CD14-positive monocyte (primary cell): ENCODE measurements at regions of chr13 and their contacts with region 1.

Region 1: DNA sequence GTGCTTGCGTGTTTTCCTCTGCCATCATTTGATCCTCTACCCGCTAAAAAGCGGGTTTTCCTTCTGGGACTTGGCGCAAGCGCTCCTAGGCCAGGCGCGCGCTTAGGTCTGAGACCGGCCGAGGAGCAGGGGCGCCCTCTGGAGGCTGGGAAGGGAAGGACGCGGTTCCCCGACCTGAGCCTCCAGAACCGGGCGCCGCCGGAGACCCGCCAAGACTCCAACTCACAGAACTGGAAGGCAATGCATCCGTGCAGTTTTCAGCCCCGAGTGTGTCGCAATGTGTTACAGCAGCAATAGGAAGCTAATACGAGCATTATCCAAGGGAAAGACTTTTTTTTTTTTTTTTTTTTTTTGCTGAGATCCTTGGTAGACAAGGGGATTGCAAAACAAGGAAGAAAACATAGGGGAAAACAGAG is 190.9 kb downstream of the COL4A1 start:
- DNase-seq: peak; percentile 41 to 65 (median 64)
- H3K4me3 ChIP-seq: peak overlapping the region in 1 of 3 experiments; percentile 31
- H3K4me3 Mint-ChIP-seq: peak overlapping the region; percentile 31 to 86
- H3K27ac ChIP-seq: no peak overlapping the region
- H3K27ac Mint-ChIP-seq: no peak overlapping the region
- H3K4me1 ChIP-seq: peaks cover 12 to 21% of the 10 kb centered on the region in 2 donors
- H3K4me1 Mint-ChIP-seq: peaks cover 15% of the 10 kb centered on the region
- H3K27me3 ChIP-seq: peaks cover 0 to 2% of the 10 kb centered on the region in 2 donors
- H3K27me3 Mint-ChIP-seq: peaks cover 14 to 22% (median 20%) of the 10 kb centered on the region in 3 donors
- CTCF ChIP-seq: peak; percentile 85

Region 2: GRCh38 chr13:108961542-108962125 is 1154.4 kb before region 1 on chr13:
- intact Hi-C with region 1: loop called (anchors 5 to 10 kb)
- DNase-seq: peak; percentile 38 to 82 (median 69)
- H3K4me3 ChIP-seq: no peak overlapping the region
- H3K4me3 Mint-ChIP-seq: no peak overlapping the region
- H3K27ac ChIP-seq: no peak overlapping the region
- H3K27ac Mint-ChIP-seq: no peak overlapping the region
- H3K4me1 ChIP-seq: no peaks in the 10 kb centered on the region
- H3K4me1 Mint-ChIP-seq: peaks cover 4% of the 10 kb centered on the region
- H3K27me3 ChIP-seq: no peaks in the 10 kb centered on the region
- H3K27me3 Mint-ChIP-seq: peaks cover 0 to 2% (median 1%) of the 10 kb centered on the region in 3 donors
- CTCF ChIP-seq: peak; percentile 88

Region 3: DNA sequence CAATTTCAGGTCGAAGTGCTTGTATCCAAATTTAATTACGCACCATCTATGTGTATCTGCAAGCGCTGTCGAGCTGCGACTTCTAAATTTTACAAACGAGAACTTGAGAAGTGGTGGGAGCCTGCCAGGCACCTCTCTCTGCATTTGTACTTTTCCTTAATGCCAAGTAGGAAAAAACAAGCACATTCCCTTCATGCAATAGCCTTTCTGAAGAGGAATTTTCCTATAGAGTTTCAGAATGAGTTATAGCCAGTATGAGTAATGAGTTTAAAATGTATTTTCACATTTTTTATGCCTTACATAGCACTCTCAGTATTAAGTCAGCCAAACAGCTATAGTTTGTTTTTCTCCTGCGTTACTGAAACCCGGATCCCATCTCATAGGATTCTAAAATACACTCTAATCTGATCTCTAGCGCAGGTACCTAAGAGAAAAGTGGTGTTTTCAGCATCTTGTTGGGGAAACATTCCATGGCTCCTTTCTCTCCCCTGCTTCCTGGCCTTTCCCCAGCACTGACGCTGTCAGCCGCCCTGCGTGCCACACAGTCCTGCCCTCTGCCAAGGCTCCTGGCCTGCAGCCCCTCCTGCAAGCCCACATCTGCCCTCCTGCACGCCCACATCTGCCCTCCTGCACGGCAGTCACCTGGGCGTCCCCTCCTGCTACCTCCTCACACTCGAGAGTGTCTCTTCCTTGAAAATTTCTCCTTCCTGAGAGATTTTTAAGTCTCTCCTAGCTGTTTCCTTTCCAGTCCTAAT is 959.7 kb before region 1 on chr13:
- intact Hi-C with region 1: loop called in 1 of 2 experiments (anchors 10 kb)
- DNase-seq: no peak
- H3K4me3 ChIP-seq: no peak overlapping the region
- H3K4me3 Mint-ChIP-seq: no peak overlapping the region
- H3K27ac ChIP-seq: no peak overlapping the region
- H3K27ac Mint-ChIP-seq: no peak overlapping the region
- H3K4me1 ChIP-seq: no peaks in the 10 kb centered on the region
- H3K4me1 Mint-ChIP-seq: peaks cover 10% of the 10 kb centered on the region
- H3K27me3 ChIP-seq: no peaks in the 10 kb centered on the region
- H3K27me3 Mint-ChIP-seq: peaks cover 10 to 14% (median 13%) of the 10 kb centered on the region in 3 donors
- CTCF ChIP-seq: no peak

Region 4: GRCh38 chr13:110080187-110080586 is 35.9 kb before region 1 on chr13:
- intact Hi-C with region 1: no loop called
- DNase-seq: no peak
- H3K4me3 ChIP-seq: no peak overlapping the region
- H3K4me3 Mint-ChIP-seq: no peak overlapping the region
- H3K27ac ChIP-seq: no peak overlapping the region
- H3K27ac Mint-ChIP-seq: no peak overlapping the region
- H3K4me1 ChIP-seq: no peaks in the 10 kb centered on the region
- H3K4me1 Mint-ChIP-seq: no peaks in the 10 kb centered on the region
- H3K27me3 ChIP-seq: no peaks in the 10 kb centered on the region
- H3K27me3 Mint-ChIP-seq: peaks cover 0 to 5% (median 0%) of the 10 kb centered on the region in 3 donors
- CTCF ChIP-seq: no peak

Region 5: GRCh38 chr13:110161112-110161882 is 45.2 kb after region 1 on chr13:
- intact Hi-C with region 1: no loop called
- DNase-seq: peak; percentile 88 to 91 (median 90)
- H3K4me3 ChIP-seq: peak overlapping the region in 1 of 3 experiments; percentile 45
- H3K4me3 Mint-ChIP-seq: peak overlapping the region; percentile 20 to 69
- H3K27ac ChIP-seq: peak overlapping the region; percentile 99
- H3K27ac Mint-ChIP-seq: peak overlapping the region; percentile 97 to 100 (median 98)
- H3K4me1 ChIP-seq: peaks cover 60 to 79% of the 10 kb centered on the region in 2 donors
- H3K4me1 Mint-ChIP-seq: peaks cover 51% of the 10 kb centered on the region
- H3K27me3 ChIP-seq: no peaks in the 10 kb centered on the region
- H3K27me3 Mint-ChIP-seq: peaks cover 0 to 2% (median 0%) of the 10 kb centered on the region in 3 donors
- CTCF ChIP-seq: no peak